ENCODE measurements at regions of chr2 and their contacts with region 1.

Region 1: DNA sequence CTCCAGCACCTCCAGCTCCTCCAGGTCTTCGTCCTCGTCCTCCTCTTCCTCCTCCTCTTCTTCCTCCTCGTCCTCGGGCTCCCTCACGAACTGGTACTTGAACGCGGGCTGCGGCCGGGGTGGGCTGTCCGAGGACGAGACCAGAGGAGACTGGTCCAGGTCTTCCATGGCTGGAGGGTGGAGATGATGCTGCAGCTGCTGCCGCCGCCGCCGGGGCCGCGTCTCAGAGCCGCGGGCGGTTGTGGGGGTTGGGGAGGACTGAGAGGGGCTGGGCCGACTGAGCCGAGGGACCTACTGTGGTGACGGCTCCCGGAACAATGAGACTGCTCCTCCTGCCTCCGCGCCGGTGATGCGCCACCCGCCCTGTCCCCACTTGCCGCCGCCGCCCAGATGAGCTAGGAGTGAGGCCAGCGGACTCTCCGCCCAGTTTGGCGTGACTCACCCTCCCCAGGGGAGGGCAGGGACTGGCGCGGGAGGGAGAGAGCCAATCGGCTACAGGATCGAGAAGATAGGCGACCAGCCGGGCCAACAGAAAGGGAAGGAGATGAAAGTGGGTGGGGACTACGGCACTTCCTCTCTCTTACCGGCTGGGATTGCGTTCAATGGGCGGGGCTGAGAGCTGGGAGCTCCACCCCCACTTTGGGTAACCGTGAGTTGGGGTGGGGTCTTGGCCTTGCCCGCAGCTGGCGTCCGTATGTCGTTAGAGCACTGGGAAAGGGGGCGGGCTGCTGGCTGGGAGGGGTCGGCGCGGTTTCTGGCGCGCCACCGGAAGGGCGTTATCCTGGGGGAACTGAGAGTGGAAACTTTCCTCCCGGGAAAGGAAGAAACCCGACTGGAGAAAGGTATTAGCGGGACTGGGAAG is at the start of gene RTN4:
- DNase-seq: peak; percentile 99
- H3K4me3 Mint-ChIP-seq: peak within 1 kb of the TSS; percentile 96
- H3K27ac Mint-ChIP-seq: peak within 1 kb of the TSS; percentile 98
- H3K4me1 Mint-ChIP-seq: peaks cover 58% of the 10 kb centered on the region
- H3K27me3 Mint-ChIP-seq: no peaks in the 10 kb centered on the region
- total RNA-seq, gene RTN4: 96.7 to 97.5 TPM

Region 2: DNA sequence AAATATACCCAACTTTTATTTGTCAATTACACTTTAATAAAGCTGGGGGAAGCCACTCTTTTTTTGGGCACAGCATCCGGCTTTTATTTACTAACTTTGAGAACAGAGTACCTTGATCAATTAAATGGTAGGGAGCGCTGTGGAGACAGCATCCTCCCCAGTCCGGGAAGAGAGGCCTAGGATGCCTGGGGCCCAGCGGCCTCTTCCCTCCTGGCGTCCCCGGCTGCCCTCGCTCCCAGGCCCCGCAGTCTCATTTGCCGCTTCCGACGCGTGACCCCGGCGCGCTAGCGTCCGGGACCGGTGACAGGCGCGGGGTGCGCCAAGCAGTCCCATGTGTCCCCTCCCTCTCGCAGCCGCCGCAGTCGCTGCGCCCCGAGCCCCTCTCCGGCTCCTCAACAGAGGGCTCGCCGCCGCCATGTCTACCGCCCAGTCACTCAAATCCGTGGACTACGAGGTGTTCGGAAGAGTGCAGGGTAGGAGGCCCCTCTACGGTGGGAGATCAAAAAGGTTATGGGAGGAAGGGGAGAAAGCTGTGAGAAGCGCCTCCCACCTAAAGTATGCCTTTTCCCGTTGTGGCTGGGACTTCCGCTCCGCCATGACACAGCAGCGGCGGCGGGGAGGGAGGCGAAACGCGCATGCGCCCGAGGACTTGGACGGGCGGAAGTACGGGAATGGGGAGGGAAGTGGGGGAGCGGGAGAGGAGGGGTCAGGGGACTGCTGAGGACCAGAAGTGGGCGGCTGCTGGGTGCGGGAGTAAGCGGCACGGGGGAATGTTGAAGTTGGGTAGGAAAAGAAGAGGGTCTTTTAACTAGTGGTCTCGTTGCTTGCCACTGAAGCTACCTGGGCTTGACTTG is 934.9 kb before region 1 on chr2 and contains the start of gene ACYP2:
- CTCF ChIA-PET with region 1: no interaction called
- POLR2A ChIA-PET with region 1: no interaction called
- intact Hi-C with region 1: loop called (anchors 5 kb)
- DNase-seq: peak; percentile 95
- H3K4me3 Mint-ChIP-seq: peak within 1 kb of the TSS; percentile 94
- H3K27ac Mint-ChIP-seq: peak within 1 kb of the TSS; percentile 99
- H3K4me1 Mint-ChIP-seq: peaks cover 13% of the 10 kb centered on the region
- H3K27me3 Mint-ChIP-seq: no peaks in the 10 kb centered on the region
- total RNA-seq, gene ACYP2: 5.6 to 6.4 TPM

Region 3: GRCh38 chr2:54899576-54900200 is 150.7 kb before region 1 on chr2:
- CTCF ChIA-PET with region 1: no interaction called
- POLR2A ChIA-PET with region 1: no interaction called
- intact Hi-C with region 1: loop called (anchors 2 kb)
- DNase-seq: no peak
- H3K4me3 Mint-ChIP-seq: no peak overlapping the region
- H3K27ac Mint-ChIP-seq: no peak overlapping the region
- H3K4me1 Mint-ChIP-seq: peaks cover 29% of the 10 kb centered on the region
- H3K27me3 Mint-ChIP-seq: no peaks in the 10 kb centered on the region

Region 4: GRCh38 chr2:55093381-55093780 is 43.0 kb after region 1 on chr2:
- CTCF ChIA-PET with region 1: no interaction called
- POLR2A ChIA-PET with region 1: no interaction called
- intact Hi-C with region 1: loop called (anchors 5 kb)
- DNase-seq: no peak
- H3K4me3 Mint-ChIP-seq: no peak overlapping the region
- H3K27ac Mint-ChIP-seq: no peak overlapping the region
- H3K4me1 Mint-ChIP-seq: peaks cover 8% of the 10 kb centered on the region
- H3K27me3 Mint-ChIP-seq: no peaks in the 10 kb centered on the region

Region 5: GRCh38 chr2:55232084-55232862 is 181.9 kb after region 1 on chr2 and contains the starts of genes CLHC1 and RPS27A:
- CTCF ChIA-PET with region 1: no interaction called
- POLR2A ChIA-PET with region 1: interaction called, 5 read pairs
- intact Hi-C with region 1: loop called (anchors 1 kb)
- DNase-seq: peak; percentile 95
- H3K4me3 Mint-ChIP-seq: peak within 1 kb of the TSS; percentile 96
- H3K27ac Mint-ChIP-seq: peak within 1 kb of the TSS; percentile 94
- H3K4me1 Mint-ChIP-seq: peaks cover 60% of the 10 kb centered on the region
- H3K27me3 Mint-ChIP-seq: no peaks in the 10 kb centered on the region
- total RNA-seq, gene CLHC1: 5.5 to 7.5 TPM
- total RNA-seq, gene RPS27A: 1,372 to 1,402 TPM

Region 6: GRCh38 chr2:55617175-55618024 is 567.0 kb after region 1 on chr2 and contains the start of gene PPP4R3B:
- CTCF ChIA-PET with region 1: no interaction called
- POLR2A ChIA-PET with region 1: no interaction called
- intact Hi-C with region 1: loop called (anchors 1 kb)
- DNase-seq: peak; percentile 99
- H3K4me3 Mint-ChIP-seq: no peak within 1 kb of the TSS
- H3K27ac Mint-ChIP-seq: no peak within 1 kb of the TSS
- H3K4me1 Mint-ChIP-seq: peaks cover 47% of the 10 kb centered on the region
- H3K27me3 Mint-ChIP-seq: no peaks in the 10 kb centered on the region
- total RNA-seq, gene PPP4R3B: 62.4 to 65.1 TPM